GM10248 (cell line): ENCODE measurements at regions of chr7 and their contacts with region 1.

Region 1: DNA sequence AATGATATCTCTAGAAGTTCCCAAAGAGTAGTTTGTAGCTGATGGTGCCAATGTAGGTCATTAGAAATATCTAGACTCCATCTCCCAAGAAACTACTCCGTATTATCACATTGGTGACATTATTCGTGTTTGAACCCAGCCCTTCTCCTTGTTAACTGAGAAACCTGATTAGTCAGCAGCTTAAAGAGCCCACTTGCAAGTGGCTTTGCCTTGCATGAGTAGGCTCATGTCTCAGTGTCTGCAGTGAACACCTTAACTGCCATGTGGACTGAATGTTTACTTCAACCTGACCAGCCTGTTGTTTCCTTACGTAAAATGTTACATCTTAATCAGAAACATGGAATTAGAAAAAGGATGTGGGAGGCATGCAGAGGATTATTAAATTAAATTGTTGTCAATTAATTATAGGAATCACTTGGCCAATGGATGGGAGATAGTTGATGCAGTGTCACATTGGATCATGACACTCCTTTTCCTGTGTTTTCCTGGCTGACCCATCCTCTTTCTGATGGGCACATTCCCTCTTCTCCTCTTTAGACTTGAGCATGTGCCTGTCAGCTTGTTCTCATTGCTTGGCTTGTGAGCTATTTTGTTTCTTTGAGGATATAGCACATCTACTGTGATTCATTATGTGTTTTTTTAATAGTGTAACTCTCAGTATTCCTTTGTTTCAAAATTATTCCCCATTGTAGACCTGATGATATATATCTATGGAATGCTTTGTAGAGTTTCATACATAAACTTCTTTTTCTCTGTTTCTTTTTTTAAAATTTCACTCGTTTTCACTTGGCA is 18.0 kb downstream of the STARD3NL start:
- DNase-seq: no peak
- CTCF ChIP-seq: no peak

Region 2: DNA sequence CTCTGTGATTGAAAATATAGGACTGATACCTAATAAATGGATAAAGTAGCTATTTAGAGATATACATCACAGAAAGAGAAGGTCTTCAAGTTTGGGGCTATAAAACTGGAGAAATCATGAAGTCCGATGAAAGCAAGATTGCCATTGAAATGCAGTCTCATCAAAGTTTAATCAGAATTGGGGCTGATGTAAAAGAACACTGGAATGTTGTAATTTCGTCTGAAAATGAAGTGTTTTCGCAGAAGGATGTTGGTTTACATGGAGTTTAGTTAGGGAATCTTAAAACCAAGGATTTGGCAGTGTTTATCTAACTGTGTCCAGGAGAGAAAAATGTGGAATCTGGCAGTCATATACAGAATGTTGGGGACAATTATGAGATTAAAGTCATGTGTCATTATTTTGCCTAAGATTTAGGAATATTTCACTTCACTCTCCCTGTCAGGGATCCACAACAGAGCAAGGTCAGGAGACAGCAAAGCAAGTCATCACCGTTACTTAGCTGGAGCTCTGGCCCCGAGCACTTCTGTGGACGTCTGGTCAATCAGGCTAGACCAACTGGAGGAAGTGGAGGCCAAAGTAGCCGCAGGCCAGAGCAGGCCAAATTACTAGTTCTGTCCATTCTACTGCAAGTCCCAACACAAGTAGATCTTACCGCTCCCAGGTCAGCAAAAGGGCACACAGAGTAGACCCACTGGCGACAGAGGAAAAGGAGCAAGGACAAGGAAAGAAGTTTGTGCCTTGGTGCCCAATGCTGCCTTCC is 238.6 kb before region 1 on chr7:
- CTCF ChIA-PET with region 1: no interaction called
- POLR2A ChIA-PET with region 1: no interaction called
- DNase-seq: no peak
- CTCF ChIP-seq: no peak

Region 3: GRCh38 chr7:38178004-38178694 is 17.9 kb before region 1 on chr7 and contains the start of gene STARD3NL:
- CTCF ChIA-PET with region 1: interaction called, 61 read pairs
- POLR2A ChIA-PET with region 1: no interaction called
- DNase-seq: peak; percentile 97
- CTCF ChIP-seq: no peak